A549 (cell line): ENCODE measurements at regions of chr11 and their contacts with region 1.

Region 1: GRCh38 chr11:44893846-44894617 is 56.7 kb downstream of the TP53I11 start:
- DNase-seq: peak; percentile 66 to 78
- ATAC-seq: peak; percentile 88 to 98
- H3K4me3 ChIP-seq: no peak overlapping the region
- H3K27ac ChIP-seq: no peak overlapping the region
- H3K4me1 ChIP-seq: no peaks in the 10 kb centered on the region
- CTCF ChIP-seq: peak; percentile 87
- EP300 ChIP-seq: no peak
- POLR2A ChIP-seq: no peak
- RAD21 ChIP-seq: peak; percentile 92 to 94

Region 2: GRCh38 chr11:44621140-44621681 is 272.8 kb before region 1 on chr11:
- CTCF ChIA-PET with region 1: interaction called, 50 read pairs
- POLR2A ChIA-PET with region 1: no interaction called
- DNase-seq: peak; percentile 75 to 82
- ATAC-seq: peak; percentile 72 to 93
- H3K4me3 ChIP-seq: peak overlapping the region; percentile 38
- H3K27ac ChIP-seq: peak overlapping the region; percentile 67 to 69
- H3K4me1 ChIP-seq: no peaks in the 10 kb centered on the region
- CTCF ChIP-seq: peak; percentile 96
- EP300 ChIP-seq: no peak
- POLR2A ChIP-seq: no peak
- RAD21 ChIP-seq: peak; percentile 95 to 99

Region 3: GRCh38 chr11:44726283-44727113 is 167.5 kb before region 1 on chr11 and contains the start of gene TSPAN18:
- CTCF ChIA-PET with region 1: interaction called, 24 read pairs
- POLR2A ChIA-PET with region 1: no interaction called
- DNase-seq: no peak
- ATAC-seq: peak in 1 of 2 experiments; percentile 51; a peak in 2 of 6 replicates
- H3K4me3 ChIP-seq: peak within 1 kb of the TSS; percentile 56
- H3K27ac ChIP-seq: peak within 1 kb of the TSS; percentile 59 to 86
- H3K4me1 ChIP-seq: peaks cover 7% of the 10 kb centered on the region; the same call in 1 of the 3 replicates
- CTCF ChIP-seq: no peak
- EP300 ChIP-seq: no peak
- POLR2A ChIP-seq: no peak
- RAD21 ChIP-seq: no peak
- polyA plus RNA-seq, gene TSPAN18: 0.81 and 0.98 TPM in 2 replicates

Region 4: GRCh38 chr11:44814881-44815592 is 79.0 kb before region 1 on chr11:
- CTCF ChIA-PET with region 1: interaction called, 12 read pairs
- POLR2A ChIA-PET with region 1: no interaction called
- DNase-seq: no peak
- ATAC-seq: peak; percentile 60 to 63; a peak in 4 of 6 replicates
- H3K4me3 ChIP-seq: no peak overlapping the region
- H3K27ac ChIP-seq: peak overlapping the region in 1 of 2 experiments; percentile 12; a peak in 1 of 6 replicates
- H3K4me1 ChIP-seq: no peaks in the 10 kb centered on the region
- CTCF ChIP-seq: no peak
- EP300 ChIP-seq: no peak
- POLR2A ChIP-seq: no peak
- RAD21 ChIP-seq: no peak

Region 5: GRCh38 chr11:44868455-44869421 is 25.3 kb before region 1 on chr11:
- CTCF ChIA-PET with region 1: interaction called, 10 read pairs
- POLR2A ChIA-PET with region 1: no interaction called
- DNase-seq: no peak
- ATAC-seq: no peak; a peak in 1 of 6 replicates
- H3K4me3 ChIP-seq: no peak overlapping the region
- H3K27ac ChIP-seq: peak overlapping the region in 1 of 2 experiments; percentile 9; a peak in 1 of 6 replicates
- H3K4me1 ChIP-seq: peaks cover 13% of the 10 kb centered on the region
- CTCF ChIP-seq: no peak
- EP300 ChIP-seq: no peak
- POLR2A ChIP-seq: no peak
- RAD21 ChIP-seq: no peak

Region 6: GRCh38 chr11:44883277-44883676 is 10.8 kb before region 1 on chr11:
- CTCF ChIA-PET with region 1: interaction called, 25 read pairs
- POLR2A ChIA-PET with region 1: no interaction called
- DNase-seq: no peak
- ATAC-seq: no peak
- H3K4me3 ChIP-seq: no peak overlapping the region
- H3K27ac ChIP-seq: peak overlapping the region in 1 of 2 experiments; percentile 5; a peak in 1 of 6 replicates
- H3K4me1 ChIP-seq: peaks cover 22% of the 10 kb centered on the region
- CTCF ChIP-seq: no peak
- EP300 ChIP-seq: no peak
- POLR2A ChIP-seq: no peak
- RAD21 ChIP-seq: no peak

Region 7: GRCh38 chr11:45000918-45001317 is 106.9 kb after region 1 on chr11:
- CTCF ChIA-PET with region 1: no interaction called
- POLR2A ChIA-PET with region 1: no interaction called
- DNase-seq: no peak
- ATAC-seq: no peak
- H3K4me3 ChIP-seq: no peak overlapping the region
- H3K27ac ChIP-seq: no peak overlapping the region
- H3K4me1 ChIP-seq: no peaks in the 10 kb centered on the region
- CTCF ChIP-seq: no peak
- EP300 ChIP-seq: no peak
- POLR2A ChIP-seq: no peak
- RAD21 ChIP-seq: no peak